ENCODE measurements at regions of chr3 and their contacts with region 1.

Region 1: DNA sequence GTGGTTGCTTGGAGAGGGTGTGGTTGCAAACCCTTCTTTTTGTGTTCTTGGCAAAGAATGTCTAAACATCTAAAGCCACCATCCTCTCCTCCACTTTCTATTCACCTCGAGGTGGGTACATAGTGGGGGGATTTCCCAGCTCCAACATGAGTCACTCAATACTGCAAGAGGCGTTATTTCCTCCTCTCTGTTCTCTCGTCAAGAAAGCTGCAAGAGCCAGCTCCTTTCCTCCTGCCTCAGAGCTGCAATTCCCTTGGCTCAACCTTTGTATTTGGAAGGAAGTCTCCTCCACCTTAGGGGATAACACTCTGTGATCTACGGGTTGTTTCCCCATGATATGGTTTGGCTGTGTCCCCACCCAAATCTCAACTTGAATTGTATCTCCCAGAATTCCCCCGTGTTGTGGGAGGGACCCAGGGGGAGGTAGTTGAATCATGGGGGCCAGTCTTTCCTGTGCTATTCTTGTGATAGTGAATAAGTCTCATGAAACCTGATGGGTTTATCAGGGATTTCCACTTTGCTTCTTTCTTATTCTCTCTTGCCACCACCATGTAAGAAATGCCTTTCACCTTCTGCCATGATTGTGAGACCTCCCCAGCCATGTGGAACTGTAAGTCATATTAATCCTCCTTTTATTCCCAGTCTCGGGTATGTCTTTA is 138.4 kb downstream of the PLCL2 start:
- DNase-seq: peak; percentile 87
- H3K4me3 Mint-ChIP-seq: peak overlapping the region; percentile 61
- H3K27ac Mint-ChIP-seq: peak overlapping the region; percentile 88
- H3K4me1 Mint-ChIP-seq: peaks cover 52% of the 10 kb centered on the region
- H3K27me3 Mint-ChIP-seq: no peaks in the 10 kb centered on the region

Region 2: GRCh38 chr3:16906682-16907081 is 116.5 kb before region 1 on chr3:
- intact Hi-C with region 1: loop called (anchors 5 kb)
- DNase-seq: peak; percentile 75
- H3K4me3 Mint-ChIP-seq: peak overlapping the region; percentile 38
- H3K27ac Mint-ChIP-seq: no peak overlapping the region
- H3K4me1 Mint-ChIP-seq: peaks cover 61% of the 10 kb centered on the region
- H3K27me3 Mint-ChIP-seq: no peaks in the 10 kb centered on the region

Measured in activated CD4-positive, alpha-beta T cell treated with anti-CD3 and anti-CD28 coated beads, Interleukin-2, amount 10 ng/mL, durations not matched to agents 24 days and 14 days (primary cell).